ENCODE measurements at regions of chr12 and their contacts with region 1.

Region 1: DNA sequence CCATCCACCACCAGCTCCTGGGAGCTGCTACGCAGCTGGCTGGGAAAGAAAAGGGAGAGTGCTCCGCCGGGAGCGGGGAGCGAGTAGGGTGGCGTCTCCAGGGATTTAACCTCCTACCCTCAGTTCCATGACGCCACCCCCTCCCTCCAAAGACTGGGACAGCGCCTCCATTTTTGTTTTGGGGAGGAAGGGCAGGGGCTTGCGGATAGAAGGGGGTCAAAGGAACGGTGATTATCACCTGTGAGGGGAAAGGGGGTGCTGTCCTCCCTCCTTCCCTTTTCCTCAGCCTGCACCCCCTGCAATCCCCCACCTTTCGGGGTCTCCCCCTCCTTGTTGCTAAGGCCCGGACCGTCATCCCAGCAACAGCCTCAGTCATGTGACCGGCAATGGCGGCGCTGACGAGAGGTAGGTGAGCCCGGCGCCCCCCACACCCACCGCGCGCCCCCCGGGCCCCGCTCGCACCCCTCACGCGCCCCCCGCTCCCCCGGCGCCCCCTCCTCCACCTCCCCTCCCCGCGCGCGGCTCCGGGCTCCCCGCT is at the start of gene DTX3:
- DNase-seq: no peak
- H3K4me3 ChIP-seq: peak within 1 kb of the TSS; percentile 64 to 76
- H3K27ac ChIP-seq: peak within 1 kb of the TSS; percentile 99
- H3K4me1 ChIP-seq: peaks cover 26% of the 10 kb centered on the region
- H3K27me3 ChIP-seq: no peaks in the 10 kb centered on the region
- CTCF ChIP-seq: no peak
- POLR2A ChIP-seq: no peak
- total RNA-seq, gene DTX3: 22.1 TPM

Region 2: GRCh38 chr12:57520053-57520871 is 84.3 kb before region 1 on chr12 and contains the start of gene DDIT3:
- intact Hi-C with region 1: loop called (anchors 2 kb)
- DNase-seq: peak in 1 of 2 donors; percentile 99
- H3K4me3 ChIP-seq: peak within 1 kb of the TSS; percentile 82 to 90
- H3K27ac ChIP-seq: peak within 1 kb of the TSS; percentile 99
- H3K4me1 ChIP-seq: peaks cover 68% of the 10 kb centered on the region
- H3K27me3 ChIP-seq: no peaks in the 10 kb centered on the region
- CTCF ChIP-seq: no peak
- POLR2A ChIP-seq: peak; percentile 96 to 100
- total RNA-seq, gene DDIT3: 25.0 TPM

Region 3: GRCh38 chr12:59595883-59596540 is 1991.5 kb after region 1 on chr12 and contains the start of gene SLC16A7:
- intact Hi-C with region 1: loop called (anchors 5 kb)
- DNase-seq: peak in 1 of 2 donors; percentile 95
- H3K4me3 ChIP-seq: peak within 1 kb of the TSS; percentile 68 to 83
- H3K27ac ChIP-seq: peak within 1 kb of the TSS; percentile 91
- H3K4me1 ChIP-seq: peaks cover 40% of the 10 kb centered on the region
- H3K27me3 ChIP-seq: no peaks in the 10 kb centered on the region
- CTCF ChIP-seq: no peak
- POLR2A ChIP-seq: peak in 1 of 2 donors; percentile 16
- total RNA-seq, gene SLC16A7: 38.8 TPM

Measured in vagina (tissue), 2 donors.